Mammary epithelial cell (primary cell): ENCODE measurements at regions of chr6 and their contacts with region 1.

Region 1: GRCh38 chr6:37657112-37657886 is 40.4 kb downstream of the MDGA1 start:
- DNase-seq: peak; percentile 89
- H3K4me3 ChIP-seq: no peak overlapping the region
- H3K27ac ChIP-seq: no peak overlapping the region
- H3K4me1 ChIP-seq: peaks cover 13% of the 10 kb centered on the region
- H3K27me3 ChIP-seq: no peaks in the 10 kb centered on the region
- CTCF ChIP-seq: no peak

Region 2: GRCh38 chr6:37624986-37625574 is 32.2 kb before region 1 on chr6:
- CTCF ChIA-PET with region 1: interaction called, 3 read pairs
- dilution Hi-C with region 1: no loop called
- in situ Hi-C with region 1: no loop called
- intact Hi-C with region 1: loop called (anchors 2 kb)
- DNase-seq: peak; percentile 67
- H3K4me3 ChIP-seq: no peak overlapping the region
- H3K27ac ChIP-seq: no peak overlapping the region
- H3K4me1 ChIP-seq: peaks cover 34% of the 10 kb centered on the region
- H3K27me3 ChIP-seq: no peaks in the 10 kb centered on the region
- CTCF ChIP-seq: no peak

Region 3: DNA sequence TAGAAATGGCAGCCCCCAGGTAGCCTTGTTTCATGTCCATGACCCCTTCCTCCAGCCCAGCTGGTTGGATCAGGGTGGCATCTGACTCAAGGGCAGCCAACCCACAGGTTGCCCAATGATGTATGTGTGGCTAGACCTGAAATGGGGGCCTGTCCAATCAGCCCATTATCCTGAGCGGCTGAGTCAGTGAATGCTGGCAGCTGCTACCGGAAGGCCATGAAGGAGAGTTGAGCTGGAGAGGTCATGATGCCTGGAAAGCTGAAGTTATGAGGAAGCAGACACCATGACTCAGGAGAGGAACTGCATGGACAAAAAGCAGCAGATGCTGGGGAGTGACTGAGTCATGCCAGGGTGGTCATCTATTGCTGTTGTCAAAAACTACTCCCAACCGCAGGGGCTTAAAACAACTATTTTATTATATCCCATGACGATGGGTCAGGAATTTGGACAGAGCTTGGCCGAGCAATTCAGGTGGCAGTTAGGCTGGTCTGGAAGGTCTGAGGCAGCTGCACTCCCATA is 27.0 kb before region 1 on chr6:
- CTCF ChIA-PET with region 1: interaction called, 3 read pairs
- dilution Hi-C with region 1: no loop called
- in situ Hi-C with region 1: no loop called
- intact Hi-C with region 1: loop called (anchors 2 kb)
- DNase-seq: peak; percentile 99
- H3K4me3 ChIP-seq: no peak overlapping the region
- H3K27ac ChIP-seq: peak overlapping the region; percentile 57
- H3K4me1 ChIP-seq: peaks cover 20% of the 10 kb centered on the region
- H3K27me3 ChIP-seq: no peaks in the 10 kb centered on the region
- CTCF ChIP-seq: no peak